ENCODE measurements at regions of chr13 and their contacts with region 1.

Region 1: GRCh38 chr13:41465241-41465847 is 8.0 kb downstream of the RGCC start:
- DNase-seq: peak; percentile 63 to 95 (median 87)
- ATAC-seq: peak; percentile 62 to 63
- H3K4me3 Mint-ChIP-seq: peak overlapping the region; percentile 82 to 99 (median 93)
- H3K27ac Mint-ChIP-seq: peak overlapping the region; percentile 98 to 100 (median 98)
- H3K4me1 Mint-ChIP-seq: peaks cover 65 to 94% (median 91%) of the 10 kb centered on the region in 4 donors
- H3K27me3 Mint-ChIP-seq: peaks cover 0 to 6% (median 0%) of the 10 kb centered on the region in 5 donors

Region 2: GRCh38 chr13:41492404-41493260 is 27.3 kb after region 1 on chr13:
- POLR2A ChIA-PET with region 1: interaction called, 62 read pairs
- DNase-seq: peak in 5 of 10 donors; percentile 14 to 69 (median 66)
- ATAC-seq: peak; percentile 76 to 80
- H3K4me3 Mint-ChIP-seq: peak overlapping the region; percentile 63 to 88 (median 78)
- H3K27ac Mint-ChIP-seq: peak overlapping the region; percentile 96 to 100 (median 99)
- H3K4me1 Mint-ChIP-seq: peaks cover 43 to 89% (median 84%) of the 10 kb centered on the region in 4 donors
- H3K27me3 Mint-ChIP-seq: no peaks in the 10 kb centered on the region

Region 3: DNA sequence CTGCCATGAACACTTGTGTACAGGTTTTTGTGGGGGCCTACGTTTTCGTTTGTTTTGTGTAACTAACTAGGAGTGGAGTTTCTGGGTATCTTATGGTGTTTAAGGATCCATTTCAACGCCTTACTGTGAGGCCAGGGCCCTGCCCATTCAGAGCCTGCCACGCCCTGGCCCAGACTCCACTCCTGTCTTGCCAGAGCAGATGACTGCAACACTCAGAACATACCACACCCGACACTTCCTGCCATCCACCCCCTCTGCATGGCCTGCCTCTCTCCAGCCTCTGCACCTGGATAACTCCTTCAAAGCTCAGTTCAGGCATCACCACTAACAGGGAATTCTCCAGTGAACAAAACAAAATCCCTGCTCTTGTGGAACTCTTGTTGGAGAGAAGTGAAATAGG is 35.2 kb after region 1 on chr13:
- POLR2A ChIA-PET with region 1: interaction called, 30 read pairs
- DNase-seq: peak in 4 of 10 donors; percentile 13 to 23 (median 14)
- ATAC-seq: peak; percentile 82 to 86
- H3K4me3 Mint-ChIP-seq: peak overlapping the region in 6 of 10 donors; percentile 3 to 74 (median 42)
- H3K27ac Mint-ChIP-seq: peak overlapping the region; percentile 20 to 94 (median 79)
- H3K4me1 Mint-ChIP-seq: peaks cover 37 to 76% (median 73%) of the 10 kb centered on the region in 4 donors
- H3K27me3 Mint-ChIP-seq: no peaks in the 10 kb centered on the region